ENCODE measurements at regions of chr15 and their contacts with region 1.

Region 1: GRCh38 chr15:24772686-24773373 is 97.3 kb downstream of the NPAP1 start:
- DNase-seq: peak; percentile 7 to 82 (median 60)
- ATAC-seq: peak; percentile 85
- H3K4me3 ChIP-seq: peak overlapping the region; percentile 45 to 56
- H3K4me3 Mint-ChIP-seq: peak overlapping the region; percentile 85
- H3K27ac ChIP-seq: peak overlapping the region; percentile 20 to 53
- H3K27ac Mint-ChIP-seq: peak overlapping the region; percentile 94
- H3K4me1 ChIP-seq: no peaks in the 10 kb centered on the region
- H3K4me1 Mint-ChIP-seq: peaks cover 6% of the 10 kb centered on the region
- H3K27me3 ChIP-seq: no peaks in the 10 kb centered on the region
- H3K27me3 Mint-ChIP-seq: peaks cover 6% of the 10 kb centered on the region
- CTCF ChIP-seq: no peak

Region 2: DNA sequence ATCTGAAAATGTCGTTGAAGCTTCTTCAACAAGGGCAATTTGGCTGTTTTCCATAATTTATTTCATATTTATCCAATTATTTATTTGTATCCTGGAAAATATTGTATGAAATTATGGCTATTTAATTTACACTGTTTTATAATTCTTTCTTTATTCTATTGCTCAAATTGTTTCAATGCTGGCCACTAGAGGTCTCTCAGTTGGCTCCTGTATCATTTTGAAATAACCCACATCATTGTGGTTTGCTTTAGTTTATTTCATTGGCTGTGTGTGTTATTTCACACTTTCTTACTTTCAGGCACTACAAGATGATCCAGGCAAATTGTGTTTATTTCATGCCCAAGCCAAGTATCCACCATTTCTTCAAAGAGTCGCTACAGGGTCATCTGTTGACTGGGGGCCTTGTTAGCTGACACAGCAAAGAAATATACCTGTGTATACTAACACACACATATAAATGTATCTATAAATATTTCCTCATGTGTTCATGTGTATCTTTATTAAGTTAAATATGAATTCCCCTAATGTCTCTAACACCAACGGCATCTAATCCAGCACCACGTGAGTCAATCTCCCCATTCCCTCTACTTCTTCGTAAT is 11.0 kb before region 1 on chr15:
- CTCF ChIA-PET with region 1: no interaction called
- POLR2A ChIA-PET with region 1: no interaction called
- intact Hi-C with region 1: no loop called
- DNase-seq: no peak
- ATAC-seq: no peak
- H3K4me3 ChIP-seq: no peak overlapping the region
- H3K4me3 Mint-ChIP-seq: no peak overlapping the region
- H3K27ac ChIP-seq: no peak overlapping the region
- H3K27ac Mint-ChIP-seq: no peak overlapping the region
- H3K4me1 ChIP-seq: no peaks in the 10 kb centered on the region
- H3K4me1 Mint-ChIP-seq: no peaks in the 10 kb centered on the region
- H3K27me3 ChIP-seq: no peaks in the 10 kb centered on the region
- H3K27me3 Mint-ChIP-seq: no peaks in the 10 kb centered on the region
- CTCF ChIP-seq: no peak

Region 3: GRCh38 chr15:24956111-24956838 is 183.4 kb after region 1 on chr15:
- CTCF ChIA-PET with region 1: no interaction called
- POLR2A ChIA-PET with region 1: interaction called, 3 read pairs
- intact Hi-C with region 1: loop called in 1 of 2 experiments (anchors 5 kb)
- DNase-seq: peak; percentile 52 to 87 (median 77)
- ATAC-seq: peak; percentile 80
- H3K4me3 ChIP-seq: peak overlapping the region; percentile 81 to 85
- H3K4me3 Mint-ChIP-seq: peak overlapping the region; percentile 94
- H3K27ac ChIP-seq: peak overlapping the region; percentile 89 to 90
- H3K27ac Mint-ChIP-seq: peak overlapping the region; percentile 96
- H3K4me1 ChIP-seq: peaks cover 14% of the 10 kb centered on the region
- H3K4me1 Mint-ChIP-seq: peaks cover 28% of the 10 kb centered on the region
- H3K27me3 ChIP-seq: no peaks in the 10 kb centered on the region
- H3K27me3 Mint-ChIP-seq: no peaks in the 10 kb centered on the region
- CTCF ChIP-seq: no peak

Region 4: DNA sequence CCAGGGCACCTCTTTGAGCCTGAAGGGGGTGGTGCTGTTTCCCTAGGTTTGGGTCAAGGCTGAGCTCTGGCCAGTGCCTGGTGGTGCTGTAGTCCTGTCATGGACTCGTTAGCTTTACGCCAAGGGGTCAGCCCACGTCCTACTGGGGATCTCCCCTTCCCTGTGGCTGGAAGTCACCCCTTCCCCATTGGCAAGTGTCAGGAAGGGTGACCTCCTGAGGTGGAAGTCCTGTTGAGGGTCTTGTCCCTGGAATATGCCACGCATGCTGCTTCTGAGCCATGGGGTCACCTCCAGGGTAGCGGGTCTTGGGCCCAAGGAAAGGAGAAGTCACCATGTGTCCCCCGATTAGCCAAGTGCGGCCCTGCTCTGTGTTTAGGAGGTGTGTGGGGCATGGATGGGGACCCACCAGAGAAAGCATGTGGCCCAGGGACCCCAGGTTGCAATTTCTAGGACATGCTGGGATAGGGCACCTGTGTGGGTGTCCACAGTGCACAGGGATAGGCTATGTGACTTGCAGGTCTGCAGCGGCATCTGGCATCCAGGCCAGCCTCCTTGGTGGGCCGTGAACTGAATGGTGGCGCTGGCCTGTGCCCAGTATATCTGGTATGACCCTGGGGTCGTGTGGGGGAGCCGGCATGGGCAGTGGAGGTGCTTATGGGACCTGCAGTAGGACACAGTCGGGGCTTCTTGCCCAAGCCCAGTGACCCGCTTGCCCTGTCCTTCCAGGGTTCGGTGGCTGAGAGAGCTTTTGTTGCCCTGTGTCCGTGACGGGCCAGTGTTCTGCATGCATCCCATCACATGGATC is 408.7 kb after region 1 on chr15:
- CTCF ChIA-PET with region 1: no interaction called
- POLR2A ChIA-PET with region 1: no interaction called
- intact Hi-C with region 1: no loop called
- DNase-seq: peak in 2 of 9 experiments; percentile 1
- ATAC-seq: no peak
- H3K4me3 ChIP-seq: no peak overlapping the region
- H3K4me3 Mint-ChIP-seq: no peak overlapping the region
- H3K27ac ChIP-seq: no peak overlapping the region
- H3K27ac Mint-ChIP-seq: no peak overlapping the region
- H3K4me1 ChIP-seq: no peaks in the 10 kb centered on the region
- H3K4me1 Mint-ChIP-seq: no peaks in the 10 kb centered on the region
- H3K27me3 ChIP-seq: no peaks in the 10 kb centered on the region
- H3K27me3 Mint-ChIP-seq: no peaks in the 10 kb centered on the region
- CTCF ChIP-seq: no peak

Measured in CD8-positive, alpha-beta T cell (primary cell).